Endothelial cell of umbilical vein (primary cell): ENCODE measurements at regions of chr11 and their contacts with region 1.

Region 1: DNA sequence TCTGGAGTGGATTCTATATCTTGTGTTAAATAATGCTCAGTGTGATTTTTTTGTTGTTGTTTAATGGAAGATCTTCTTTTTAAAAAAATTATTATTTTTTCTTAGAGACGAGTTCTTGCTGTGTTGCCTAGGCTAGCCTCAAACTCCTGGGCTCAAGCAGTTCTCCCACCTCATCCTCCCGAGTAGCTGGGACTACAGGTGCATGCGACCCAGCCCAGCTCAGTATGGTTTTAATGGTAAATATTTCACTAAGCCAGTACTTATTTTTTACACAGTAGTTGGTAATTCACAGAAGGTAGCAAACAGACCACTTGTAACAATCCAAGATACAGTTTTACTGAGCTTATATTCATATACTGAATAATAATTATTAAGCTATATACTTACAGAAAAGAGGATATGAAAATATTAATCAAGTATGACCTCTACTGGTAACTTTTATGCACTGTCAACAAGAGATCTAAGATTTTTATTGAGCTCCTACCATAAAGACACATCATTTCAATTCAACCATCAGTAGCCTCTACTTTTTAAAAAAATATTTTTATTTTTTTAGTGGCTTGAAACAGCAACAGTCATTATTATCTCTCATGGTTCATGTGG is 6.1 kb upstream of the CD59 start:
- DNase-seq: peak; percentile 62
- H3K4me3 ChIP-seq: no peak overlapping the region
- H3K27ac ChIP-seq: no peak overlapping the region
- H3K4me1 ChIP-seq: peaks cover 9% of the 10 kb centered on the region
- H3K27me3 ChIP-seq: no peaks in the 10 kb centered on the region
- CTCF ChIP-seq: peak; percentile 22 to 27
- POLR2A ChIP-seq: no peak

Region 2: DNA sequence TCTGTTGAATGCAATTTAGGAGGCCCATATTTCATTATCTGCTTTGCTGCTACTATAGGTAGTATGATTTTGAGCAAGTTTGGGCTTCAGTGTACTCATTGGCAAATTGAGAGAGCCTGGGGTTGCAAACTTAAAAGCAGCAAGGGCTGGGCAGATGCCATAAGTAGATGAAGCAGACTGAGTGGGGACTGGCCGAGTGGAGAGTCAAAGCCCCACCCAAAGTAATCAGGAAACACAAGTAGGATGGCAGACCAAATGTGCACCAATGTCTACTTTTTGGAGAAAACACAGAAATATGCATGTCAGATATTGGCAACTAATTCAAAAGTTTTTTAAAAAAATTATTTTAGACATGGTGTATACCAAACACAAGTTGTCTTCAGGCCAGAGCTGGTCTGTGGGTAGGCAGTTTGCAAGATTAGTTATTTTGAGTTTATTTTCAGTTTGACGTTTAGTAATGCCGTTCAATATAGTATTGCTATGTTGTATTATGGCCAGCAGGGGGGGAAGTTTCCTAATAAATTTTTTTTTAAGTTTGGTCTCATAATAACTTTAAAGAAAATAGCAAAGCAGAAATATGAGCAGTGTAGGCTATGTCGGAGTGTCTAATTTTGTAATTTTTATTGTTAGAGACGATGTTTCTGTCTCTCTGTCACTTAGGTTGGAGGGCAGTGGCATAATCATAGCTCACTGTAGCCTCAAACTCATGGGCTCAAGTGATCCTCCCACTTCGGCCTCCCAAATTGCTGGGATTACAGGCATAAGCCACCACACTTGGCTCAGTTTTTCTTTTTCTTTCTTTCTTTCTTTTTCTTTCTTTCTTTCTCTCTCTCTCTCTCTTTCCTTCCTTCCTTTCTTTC is 380.1 kb before region 1 on chr11:
- CTCF ChIA-PET with region 1: interaction called, 73 read pairs
- POLR2A ChIA-PET with region 1: no interaction called
- dilution Hi-C with region 1: no loop called
- intact Hi-C with region 1: loop called (anchors 1 kb)
- DNase-seq: peak; percentile 65
- H3K4me3 ChIP-seq: no peak overlapping the region
- H3K27ac ChIP-seq: no peak overlapping the region
- H3K4me1 ChIP-seq: no peaks in the 10 kb centered on the region
- H3K27me3 ChIP-seq: no peaks in the 10 kb centered on the region
- CTCF ChIP-seq: peak; percentile 28 to 35
- POLR2A ChIP-seq: no peak

Region 3: DNA sequence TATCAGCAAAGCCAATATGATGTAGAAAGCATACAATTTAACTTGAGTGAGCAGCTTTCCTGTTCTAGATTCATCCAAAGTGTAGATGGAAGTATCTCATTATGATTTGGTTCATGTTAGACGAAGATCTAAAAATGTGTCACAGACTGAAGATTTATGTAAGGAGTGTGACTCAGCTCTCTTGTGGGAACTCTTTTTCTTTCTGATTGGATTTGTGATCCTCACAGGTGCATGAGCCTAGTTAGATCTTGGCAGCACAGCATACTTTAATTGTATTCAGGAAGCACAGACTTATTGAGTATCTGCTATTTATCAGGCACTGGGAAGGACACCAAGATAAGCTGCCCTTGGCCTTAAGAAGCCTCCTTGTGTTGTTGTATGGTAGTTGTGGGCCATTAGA is 188.9 kb before region 1 on chr11:
- CTCF ChIA-PET with region 1: interaction called, 10 read pairs
- POLR2A ChIA-PET with region 1: no interaction called
- dilution Hi-C with region 1: no loop called
- intact Hi-C with region 1: no loop called
- DNase-seq: peak; percentile 39
- H3K4me3 ChIP-seq: no peak overlapping the region
- H3K27ac ChIP-seq: no peak overlapping the region
- H3K4me1 ChIP-seq: no peaks in the 10 kb centered on the region
- H3K27me3 ChIP-seq: no peaks in the 10 kb centered on the region
- CTCF ChIP-seq: no peak
- POLR2A ChIP-seq: no peak

Region 4: DNA sequence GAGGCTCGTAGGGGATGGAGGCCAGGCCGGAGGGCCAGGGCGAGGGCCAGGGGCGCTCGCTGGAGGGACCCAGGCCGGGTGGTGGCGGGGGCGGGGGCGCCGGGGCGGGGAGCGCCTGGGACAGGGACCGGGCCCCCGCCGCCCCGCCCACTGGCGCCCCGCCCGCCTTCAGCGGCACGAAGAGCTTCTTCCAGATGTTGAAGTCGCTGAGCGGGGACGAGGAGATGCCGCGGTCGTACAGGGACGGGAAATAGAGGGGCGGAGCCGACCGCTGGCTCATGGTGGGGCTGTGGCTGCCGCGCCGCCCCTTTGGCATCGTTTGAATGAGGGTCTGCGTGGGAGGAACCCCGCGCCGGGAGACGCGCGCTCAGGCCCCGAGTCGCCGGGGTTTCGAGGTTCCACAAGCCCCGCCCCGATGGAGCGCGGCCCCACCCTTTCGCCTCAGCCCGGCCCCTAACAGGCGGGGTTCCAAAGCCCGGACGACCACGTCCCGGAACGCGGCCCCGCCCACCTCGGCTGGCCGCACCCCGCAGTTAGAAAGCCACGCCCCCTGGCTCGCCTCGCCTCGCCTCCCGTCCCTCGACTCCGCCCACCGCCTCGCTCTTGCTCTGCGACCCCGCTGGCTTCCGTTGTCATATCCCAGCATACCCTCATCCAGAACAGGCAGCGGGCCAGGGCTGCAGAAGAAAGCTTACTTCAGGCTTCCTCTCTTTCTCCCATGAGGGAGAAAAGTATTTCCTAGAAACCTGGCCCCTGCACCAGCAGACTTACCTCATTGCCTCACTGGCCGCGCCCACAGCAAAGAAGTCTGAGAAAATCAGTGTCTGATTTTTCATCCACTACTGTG is 41.7 kb before region 1 on chr11 and contains the start of gene C11orf91:
- CTCF ChIA-PET with region 1: interaction called, 68 read pairs
- POLR2A ChIA-PET with region 1: interaction called, 8 read pairs
- dilution Hi-C with region 1: no loop called
- intact Hi-C with region 1: no loop called
- DNase-seq: peak; percentile 98
- H3K4me3 ChIP-seq: peak within 1 kb of the TSS in 2 of 3 experiments; percentile 8 to 38
- H3K27ac ChIP-seq: peak within 1 kb of the TSS; percentile 89
- H3K4me1 ChIP-seq: peaks cover 52% of the 10 kb centered on the region
- H3K27me3 ChIP-seq: no peaks in the 10 kb centered on the region
- CTCF ChIP-seq: no peak
- POLR2A ChIP-seq: peak; percentile 88
- total RNA-seq, gene C11orf91: 1.4 and 2.1 TPM in 2 replicates

Region 5: DNA sequence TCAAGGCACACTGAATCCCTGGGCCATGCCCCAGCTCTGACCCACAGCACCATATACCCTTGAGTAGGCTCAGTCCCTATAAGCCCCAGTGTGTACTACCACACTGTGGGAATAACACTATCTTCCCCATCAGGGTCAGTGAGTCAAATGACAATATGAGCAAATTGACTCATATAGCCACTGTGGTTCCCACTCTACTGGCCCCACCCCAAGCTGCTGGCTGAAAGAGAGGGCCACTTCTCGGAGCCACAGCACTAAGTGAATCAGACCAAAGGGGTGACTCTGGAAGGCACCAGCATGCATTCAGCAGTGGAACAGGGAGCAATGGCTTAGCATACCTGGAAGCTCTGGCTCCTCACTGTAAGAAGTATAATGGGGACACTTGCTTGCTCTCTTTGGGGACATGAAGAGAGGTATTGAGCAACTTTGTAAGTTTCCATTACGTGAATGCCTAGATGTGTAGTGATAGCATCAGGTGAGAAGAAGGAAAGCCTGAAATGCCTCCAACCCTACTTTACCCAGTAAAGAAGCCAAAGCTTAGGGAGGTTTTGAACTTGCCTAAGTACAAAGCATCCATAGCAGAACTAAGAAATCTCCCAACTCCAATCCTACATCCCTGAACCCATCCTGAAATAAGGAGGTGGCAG is 19.6 kb before region 1 on chr11:
- CTCF ChIA-PET with region 1: interaction called, 254 read pairs
- POLR2A ChIA-PET with region 1: interaction called, 7 read pairs
- dilution Hi-C with region 1: no loop called
- intact Hi-C with region 1: no loop called
- DNase-seq: peak; percentile 69
- H3K4me3 ChIP-seq: no peak overlapping the region
- H3K27ac ChIP-seq: peak overlapping the region; percentile 99
- H3K4me1 ChIP-seq: peaks cover 60% of the 10 kb centered on the region
- H3K27me3 ChIP-seq: no peaks in the 10 kb centered on the region
- CTCF ChIP-seq: no peak
- POLR2A ChIP-seq: no peak

Region 6: GRCh38 chr11:34149786-34150185 is 407.4 kb after region 1 on chr11:
- CTCF ChIA-PET with region 1: no interaction called
- POLR2A ChIA-PET with region 1: no interaction called
- dilution Hi-C with region 1: no loop called
- intact Hi-C with region 1: no loop called
- DNase-seq: no peak
- H3K4me3 ChIP-seq: no peak overlapping the region
- H3K27ac ChIP-seq: no peak overlapping the region
- H3K4me1 ChIP-seq: no peaks in the 10 kb centered on the region
- H3K27me3 ChIP-seq: no peaks in the 10 kb centered on the region
- CTCF ChIP-seq: no peak
- POLR2A ChIP-seq: no peak